IMR-90 (cell line): ENCODE measurements at regions of chr7 and their contacts with region 1.

Region 1: GRCh38 chr7:151631968-151632749 is 112.5 kb upstream of the RHEB start:
- DNase-seq: peak; percentile 64
- ATAC-seq: peak; percentile 89
- H3K4me3 ChIP-seq: peak overlapping the region; percentile 94
- H3K27ac ChIP-seq: peak overlapping the region; percentile 65; the same call in 1 of the 2 replicates
- H3K4me1 ChIP-seq: no peaks in the 10 kb centered on the region; the same call in 1 of the 2 replicates
- H3K27me3 ChIP-seq: no peaks in the 10 kb centered on the region
- CTCF ChIP-seq: peak; percentile 62
- POLR2A ChIP-seq: peak; percentile 34; the same call in 1 of the 2 replicates
- RAD21 ChIP-seq: peak; percentile 57

Region 2: DNA sequence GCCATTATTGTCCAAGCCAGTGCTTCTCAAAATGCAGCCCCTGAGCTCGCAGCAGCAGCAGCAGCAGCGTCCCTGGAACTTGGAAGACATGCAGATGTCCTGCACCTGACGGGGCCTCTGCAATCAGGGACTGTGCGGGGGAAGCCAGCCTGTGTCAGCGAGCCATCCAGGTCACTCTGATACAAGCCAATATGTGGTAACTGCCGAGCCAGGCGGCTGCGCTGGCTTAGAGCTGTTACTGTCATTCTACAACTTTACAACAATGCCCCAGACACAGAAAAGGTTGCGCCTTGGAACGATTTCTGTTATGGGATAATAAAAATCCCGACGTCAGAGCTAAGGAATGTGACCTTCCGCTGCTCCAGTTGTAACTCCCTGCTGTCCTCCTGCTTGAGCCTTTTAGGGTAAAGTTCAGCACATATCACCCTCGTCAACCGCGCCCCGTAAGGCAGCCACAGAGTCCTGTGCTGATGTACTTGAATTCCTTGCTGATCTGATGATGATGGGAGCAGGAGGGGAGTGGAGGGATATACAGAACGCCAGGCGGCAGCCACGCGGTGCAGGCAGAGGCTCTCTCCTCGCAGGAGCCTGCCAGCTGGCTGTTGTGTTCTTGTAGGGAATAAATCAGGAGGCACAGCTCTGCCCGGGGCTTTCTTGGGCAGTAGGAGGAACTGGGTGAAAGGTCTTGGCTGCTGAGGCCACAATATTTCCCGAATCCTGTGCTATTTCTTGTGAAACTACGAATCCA is 172.3 kb before region 1 on chr7:
- CTCF ChIA-PET with region 1: no interaction called
- POLR2A ChIA-PET with region 1: no interaction called
- dilution Hi-C with region 1: no loop called
- in situ Hi-C with region 1: no loop called
- intact Hi-C with region 1: loop called (anchors 5 kb)
- DNase-seq: peak; percentile 86
- ATAC-seq: peak; percentile 93
- H3K4me3 ChIP-seq: peak overlapping the region; percentile 6; the same call in 1 of the 2 replicates
- H3K27ac ChIP-seq: peak overlapping the region; percentile 74
- H3K4me1 ChIP-seq: peaks cover 14% of the 10 kb centered on the region
- H3K27me3 ChIP-seq: no peaks in the 10 kb centered on the region
- CTCF ChIP-seq: peak; percentile 50
- POLR2A ChIP-seq: peak; percentile 22; the same call in 1 of the 2 replicates
- RAD21 ChIP-seq: peak; percentile 59

Region 3: GRCh38 chr7:151570366-151570915 is 61.7 kb before region 1 on chr7:
- CTCF ChIA-PET with region 1: interaction called, 4 read pairs
- POLR2A ChIA-PET with region 1: no interaction called
- dilution Hi-C with region 1: no loop called
- in situ Hi-C with region 1: no loop called
- intact Hi-C with region 1: loop called (anchors 2 kb)
- DNase-seq: peak; percentile 47
- ATAC-seq: no peak
- H3K4me3 ChIP-seq: no peak overlapping the region
- H3K27ac ChIP-seq: no peak overlapping the region
- H3K4me1 ChIP-seq: peaks cover 4% of the 10 kb centered on the region
- H3K27me3 ChIP-seq: no peaks in the 10 kb centered on the region
- CTCF ChIP-seq: peak; percentile 67
- POLR2A ChIP-seq: no peak
- RAD21 ChIP-seq: peak; percentile 75

Region 4: GRCh38 chr7:151699147-151699546 is 67.0 kb after region 1 on chr7:
- CTCF ChIA-PET with region 1: no interaction called
- POLR2A ChIA-PET with region 1: no interaction called
- dilution Hi-C with region 1: no loop called
- in situ Hi-C with region 1: no loop called
- intact Hi-C with region 1: loop called (anchors 2 kb)
- DNase-seq: peak; percentile 97
- ATAC-seq: peak; percentile 96
- H3K4me3 ChIP-seq: no peak overlapping the region
- H3K27ac ChIP-seq: no peak overlapping the region
- H3K4me1 ChIP-seq: peaks cover 12% of the 10 kb centered on the region
- H3K27me3 ChIP-seq: no peaks in the 10 kb centered on the region
- CTCF ChIP-seq: peak; percentile 11; the same call in 1 of the 2 replicates
- POLR2A ChIP-seq: no peak
- RAD21 ChIP-seq: peak; percentile 30

Region 5: GRCh38 chr7:151754142-151754590 is 122.0 kb after region 1 on chr7:
- CTCF ChIA-PET with region 1: interaction called, 5 read pairs
- POLR2A ChIA-PET with region 1: no interaction called
- dilution Hi-C with region 1: no loop called
- in situ Hi-C with region 1: loop called (anchors 10 kb)
- intact Hi-C with region 1: loop called (anchors 2 kb)
- DNase-seq: peak; percentile 99
- ATAC-seq: peak; percentile 85
- H3K4me3 ChIP-seq: no peak overlapping the region
- H3K27ac ChIP-seq: peak overlapping the region; percentile 91
- H3K4me1 ChIP-seq: peaks cover 36% of the 10 kb centered on the region
- H3K27me3 ChIP-seq: no peaks in the 10 kb centered on the region
- CTCF ChIP-seq: peak; percentile 99
- POLR2A ChIP-seq: no peak
- RAD21 ChIP-seq: peak; percentile 74